ENCODE measurements at regions of chr9 and their contacts with region 1.

Region 1: DNA sequence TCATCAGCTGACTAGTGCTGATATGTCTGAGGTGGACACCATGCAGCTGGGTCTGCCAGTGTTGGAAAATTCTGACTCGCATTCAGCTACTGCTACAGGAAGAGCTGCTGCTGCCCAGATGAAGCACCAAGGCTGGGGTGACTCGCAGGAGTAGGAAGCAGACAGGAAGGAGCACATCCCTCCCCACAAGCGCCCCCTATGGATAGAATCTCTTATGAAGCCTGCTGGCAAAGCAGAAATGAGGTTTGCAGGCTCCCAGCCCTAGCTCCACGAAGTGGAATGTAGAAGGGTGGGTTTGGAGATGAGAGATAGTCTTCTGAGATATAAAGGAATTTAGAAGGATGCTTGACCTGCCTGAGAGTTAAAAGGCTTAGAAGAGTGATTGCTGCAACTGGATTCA is 443.0 kb downstream of the ACTL7B start:
- DNase-seq: no peak
- ATAC-seq: no peak

Region 2: DNA sequence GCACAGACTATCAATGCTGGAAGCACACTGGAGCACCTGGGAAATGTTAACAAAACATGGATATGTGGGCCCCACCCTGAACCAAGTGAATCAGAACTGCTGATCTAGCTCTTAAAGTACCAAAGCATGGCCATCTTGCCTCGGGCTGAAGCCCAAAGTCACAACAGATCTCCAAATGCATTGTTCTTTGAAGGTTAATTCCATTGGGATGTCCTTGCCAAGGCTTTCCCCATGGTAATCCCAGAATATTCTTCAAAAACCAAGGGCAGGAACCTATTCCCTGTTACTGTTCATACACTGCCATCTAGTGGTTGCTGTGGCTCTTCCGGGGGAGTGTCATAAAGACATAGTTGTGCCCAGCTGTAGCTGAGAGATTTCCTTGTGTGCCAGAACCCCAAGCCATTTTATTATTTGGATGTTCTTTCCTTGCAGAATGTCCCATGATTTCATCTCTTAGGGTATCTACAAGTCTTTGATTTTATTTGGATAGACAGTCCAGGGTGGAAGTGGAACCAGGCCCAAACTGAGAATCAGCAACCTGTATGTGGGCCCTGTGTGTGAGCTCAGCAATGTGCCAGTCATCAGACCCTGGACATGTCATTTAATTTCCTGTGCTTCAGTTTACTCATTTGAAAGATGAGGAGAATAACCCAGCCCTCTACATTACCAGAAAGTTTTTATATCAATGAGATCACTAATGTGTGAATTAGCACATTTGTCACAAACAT is 153.1 kb after region 1 on chr9:
- intact Hi-C with region 1: loop called (anchors 10 kb)
- DNase-seq: no peak
- ATAC-seq: peak; percentile 96